ENCODE measurements at regions of chr19 and their contacts with region 1.

Region 1: DNA sequence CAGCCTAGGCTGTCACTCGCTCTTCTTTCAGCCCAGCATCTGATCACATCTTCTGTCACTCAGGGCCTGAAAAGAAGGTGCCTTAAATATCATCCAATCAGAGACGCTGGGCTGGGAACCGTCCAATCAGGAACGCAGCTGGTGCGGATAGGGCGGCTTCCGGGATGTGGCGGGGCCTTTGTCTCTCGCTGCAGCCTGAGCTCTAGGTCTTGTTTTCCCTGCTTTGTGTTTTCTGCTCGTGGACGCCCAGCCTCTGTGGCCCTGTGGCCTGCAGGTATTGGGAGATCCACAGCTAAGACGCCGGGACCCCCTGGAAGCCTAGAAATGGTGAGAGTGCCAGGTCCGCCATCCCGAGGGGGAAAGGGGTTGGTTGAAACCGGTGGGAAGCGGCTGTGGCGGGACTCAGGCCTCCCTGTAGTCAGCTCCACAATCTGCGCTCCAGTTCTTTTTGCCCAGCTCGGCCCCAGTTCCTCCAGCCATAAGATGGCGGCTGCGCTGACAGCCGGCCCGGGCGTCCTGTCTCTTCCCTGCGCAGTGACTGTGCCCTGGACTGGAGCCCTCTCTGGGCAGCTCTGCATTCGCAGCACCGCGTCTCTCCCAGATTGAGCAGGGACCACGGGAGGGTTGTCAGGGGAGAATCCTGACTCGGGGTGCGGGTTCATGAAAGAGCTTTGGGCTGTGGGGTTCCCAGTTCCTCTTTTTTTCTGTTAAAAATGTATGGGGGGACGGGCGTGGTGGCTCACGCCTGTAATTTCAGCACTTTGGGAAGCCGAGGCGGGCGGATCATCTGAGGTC is at the start of gene ZNF85:
- DNase-seq: peak; percentile 96
- H3K4me3 Mint-ChIP-seq: peak within 1 kb of the TSS; percentile 97
- H3K27ac Mint-ChIP-seq: peak within 1 kb of the TSS; percentile 94
- H3K4me1 Mint-ChIP-seq: peaks cover 17% of the 10 kb centered on the region
- H3K27me3 Mint-ChIP-seq: no peaks in the 10 kb centered on the region
- total RNA-seq, gene ZNF85: 12.8 to 15.1 TPM

Region 2: GRCh38 chr19:20077791-20078463 is 845.3 kb before region 1 on chr19 and contains the start of gene ZNF90:
- CTCF ChIA-PET with region 1: no interaction called
- intact Hi-C with region 1: loop called (anchors 5 kb)
- DNase-seq: peak; percentile 98
- H3K4me3 Mint-ChIP-seq: peak within 1 kb of the TSS; percentile 97
- H3K27ac Mint-ChIP-seq: peak within 1 kb of the TSS; percentile 63
- H3K4me1 Mint-ChIP-seq: peaks cover 9% of the 10 kb centered on the region
- H3K27me3 Mint-ChIP-seq: no peaks in the 10 kb centered on the region
- total RNA-seq, gene ZNF90: 15.5 to 17.6 TPM

Region 3: GRCh38 chr19:20565321-20566018 is 357.8 kb before region 1 on chr19 and contains the start of gene ZNF737:
- CTCF ChIA-PET with region 1: interaction called, 3 read pairs
- intact Hi-C with region 1: loop called (anchors 2 kb)
- DNase-seq: peak; percentile 96
- H3K4me3 Mint-ChIP-seq: peak within 1 kb of the TSS; percentile 94
- H3K27ac Mint-ChIP-seq: peak within 1 kb of the TSS; percentile 96
- H3K4me1 Mint-ChIP-seq: peaks cover 14% of the 10 kb centered on the region
- H3K27me3 Mint-ChIP-seq: no peaks in the 10 kb centered on the region
- total RNA-seq, gene ZNF737: 7.9 to 9.4 TPM

Region 4: DNA sequence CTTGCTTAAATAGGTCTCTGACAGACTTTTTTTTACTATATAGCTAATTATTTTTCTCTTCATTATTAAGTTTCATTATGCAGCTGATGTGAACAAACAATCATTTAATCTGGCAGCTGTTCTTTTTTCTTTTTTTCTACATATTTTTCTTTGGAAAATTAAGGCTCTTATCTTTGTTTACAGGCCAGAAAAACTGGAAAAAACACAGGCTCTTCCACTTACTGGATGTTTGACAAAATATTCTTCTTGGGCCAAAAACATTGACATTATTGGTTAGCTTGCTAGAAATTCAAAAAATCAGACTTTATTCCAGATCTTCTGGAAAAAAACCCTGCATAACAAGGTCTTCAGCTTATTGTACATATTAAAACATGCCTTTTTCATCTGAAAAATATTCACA is 131.5 kb before region 1 on chr19:
- CTCF ChIA-PET with region 1: no interaction called
- intact Hi-C with region 1: no loop called
- DNase-seq: no peak
- H3K4me3 Mint-ChIP-seq: no peak overlapping the region
- H3K27ac Mint-ChIP-seq: no peak overlapping the region
- H3K4me1 Mint-ChIP-seq: peaks cover 5% of the 10 kb centered on the region
- H3K27me3 Mint-ChIP-seq: no peaks in the 10 kb centered on the region

Region 5: GRCh38 chr19:20999731-21000352 is 76.6 kb after region 1 on chr19:
- CTCF ChIA-PET with region 1: interaction called, 3 read pairs
- intact Hi-C with region 1: loop called (anchors 1 kb)
- DNase-seq: peak; percentile 96
- H3K4me3 Mint-ChIP-seq: peak overlapping the region; percentile 97
- H3K27ac Mint-ChIP-seq: peak overlapping the region; percentile 87
- H3K4me1 Mint-ChIP-seq: peaks cover 3% of the 10 kb centered on the region
- H3K27me3 Mint-ChIP-seq: no peaks in the 10 kb centered on the region

Region 6: DNA sequence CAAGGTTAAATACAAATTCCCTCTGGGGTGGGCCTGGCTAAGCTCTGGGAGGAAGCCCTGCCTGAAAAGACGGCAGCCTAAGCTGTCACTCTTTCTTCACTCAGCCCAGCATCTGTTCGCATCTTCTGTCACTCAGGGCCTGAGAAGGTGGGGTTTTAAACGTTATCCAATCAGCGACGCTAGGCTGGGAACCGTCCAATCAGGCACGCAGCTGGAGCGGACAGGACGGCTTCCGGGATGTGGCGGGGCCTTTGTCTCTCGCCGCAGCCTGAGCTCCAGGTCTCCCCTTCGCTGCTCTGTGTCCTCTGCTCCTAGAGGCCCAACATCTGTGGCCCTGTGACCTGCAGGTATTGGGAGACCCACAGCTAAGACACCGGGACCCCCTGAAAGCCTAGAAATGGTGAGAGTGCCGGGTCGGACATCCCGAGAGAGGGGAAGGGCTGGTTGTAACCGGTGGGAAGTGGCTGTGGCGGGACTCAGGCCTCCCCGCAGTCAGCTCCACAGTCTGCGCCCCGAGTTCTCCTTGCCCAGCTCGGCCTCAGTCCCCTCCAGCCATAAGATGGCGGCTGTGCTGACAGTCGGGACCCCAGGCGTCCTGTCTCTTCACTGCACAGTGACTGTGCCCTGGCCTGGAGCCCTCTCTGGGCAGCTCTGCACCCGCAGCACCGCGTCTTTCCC is 218.7 kb after region 1 on chr19 and contains the start of gene ZNF431:
- CTCF ChIA-PET with region 1: no interaction called
- intact Hi-C with region 1: loop called (anchors 1 kb)
- DNase-seq: peak; percentile 95
- H3K4me3 Mint-ChIP-seq: peak within 1 kb of the TSS; percentile 99
- H3K27ac Mint-ChIP-seq: peak within 1 kb of the TSS; percentile 94
- H3K4me1 Mint-ChIP-seq: peaks cover 43% of the 10 kb centered on the region
- H3K27me3 Mint-ChIP-seq: no peaks in the 10 kb centered on the region
- total RNA-seq, gene ZNF431: 13.2 to 16.4 TPM

Region 7: GRCh38 chr19:21396893-21397572 is 473.8 kb after region 1 on chr19 and contains the start of gene ZNF493:
- CTCF ChIA-PET with region 1: no interaction called
- intact Hi-C with region 1: loop called (anchors 5 kb)
- DNase-seq: peak; percentile 97
- H3K4me3 Mint-ChIP-seq: peak within 1 kb of the TSS; percentile 96
- H3K27ac Mint-ChIP-seq: peak within 1 kb of the TSS; percentile 92
- H3K4me1 Mint-ChIP-seq: peaks cover 21% of the 10 kb centered on the region
- H3K27me3 Mint-ChIP-seq: no peaks in the 10 kb centered on the region
- total RNA-seq, gene ZNF493: 10.3 to 10.9 TPM

Measured in activated naive CD4-positive, alpha-beta T cell treated with anti-CD3 and anti-CD28 coated beads for 36 hours (primary cell).